ENCODE measurements at regions of chr16 and their contacts with region 1.

Region 1: GRCh38 chr16:14329727-14330350 is 258.7 kb downstream of the MRTFB start:
- DNase-seq: no peak
- H3K4me3 ChIP-seq: no peak overlapping the region
- H3K27ac ChIP-seq: no peak overlapping the region
- H3K4me1 ChIP-seq: no peaks in the 10 kb centered on the region
- H3K27me3 ChIP-seq: peaks cover 0 to 5% of the 10 kb centered on the region in 2 experiments
- CTCF ChIP-seq: no peak
- POLR2A ChIP-seq: no peak

Region 2: GRCh38 chr16:14070877-14071575 is 258.8 kb before region 1 on chr16 and contains the start of gene MRTFB:
- CTCF ChIA-PET with region 1: no interaction called
- POLR2A ChIA-PET with region 1: no interaction called
- dilution Hi-C with region 1: no loop called
- intact Hi-C with region 1: no loop called
- DNase-seq: peak; percentile 70
- H3K4me3 ChIP-seq: peak within 1 kb of the TSS; percentile 74 to 96 (median 82)
- H3K27ac ChIP-seq: peak within 1 kb of the TSS; percentile 68
- H3K4me1 ChIP-seq: peaks cover 11% of the 10 kb centered on the region
- H3K27me3 ChIP-seq: no peaks in the 10 kb centered on the region
- CTCF ChIP-seq: no peak
- POLR2A ChIP-seq: no peak
- total RNA-seq, gene MRTFB: 49.5 and 50.2 TPM in 2 replicates

Region 3: GRCh38 chr16:14193316-14193871 is 136.4 kb before region 1 on chr16:
- CTCF ChIA-PET with region 1: no interaction called
- POLR2A ChIA-PET with region 1: no interaction called
- dilution Hi-C with region 1: no loop called
- intact Hi-C with region 1: no loop called
- DNase-seq: no peak
- H3K4me3 ChIP-seq: no peak overlapping the region
- H3K27ac ChIP-seq: no peak overlapping the region
- H3K4me1 ChIP-seq: peaks cover 18% of the 10 kb centered on the region
- H3K27me3 ChIP-seq: no peaks in the 10 kb centered on the region
- CTCF ChIP-seq: no peak
- POLR2A ChIP-seq: no peak

Region 4: DNA sequence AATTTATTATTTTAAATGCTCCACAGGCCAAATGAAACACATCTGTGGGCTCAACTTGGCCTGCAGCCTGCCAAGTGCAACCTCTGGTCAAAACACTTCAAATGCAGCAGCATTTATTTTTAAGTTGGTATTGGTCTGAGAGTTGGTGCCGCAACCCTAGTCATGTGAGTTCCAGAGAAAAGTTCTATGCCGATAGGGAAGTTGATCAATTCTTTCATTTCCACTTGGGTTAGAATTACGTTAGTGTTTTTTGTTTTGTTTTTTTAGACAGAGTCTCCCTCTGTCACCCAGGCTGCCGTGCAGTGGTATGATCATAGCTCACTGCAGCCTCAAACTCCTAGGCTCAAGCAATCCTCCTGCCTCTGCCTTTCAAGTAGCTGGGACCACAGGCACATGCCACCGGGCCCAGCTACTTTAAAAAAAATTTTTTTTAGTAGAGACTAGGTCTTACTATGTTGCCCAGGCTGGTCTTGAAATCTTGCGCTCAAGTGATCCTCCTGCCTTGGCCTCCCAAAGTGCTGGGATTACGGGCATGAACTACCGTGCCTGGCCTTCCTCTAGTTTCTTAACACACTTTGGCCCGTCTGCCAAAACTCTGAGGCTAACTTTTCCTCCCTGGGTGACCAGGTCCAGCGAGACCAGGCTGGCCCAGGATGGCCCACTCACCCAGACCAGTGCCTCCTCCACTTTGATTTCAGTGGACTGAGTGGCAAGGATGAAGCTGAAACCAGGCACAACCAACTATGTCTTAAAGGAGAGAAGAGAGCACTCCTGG is 37.6 kb before region 1 on chr16:
- CTCF ChIA-PET with region 1: no interaction called
- POLR2A ChIA-PET with region 1: no interaction called
- dilution Hi-C with region 1: no loop called
- intact Hi-C with region 1: no loop called
- DNase-seq: no peak
- H3K4me3 ChIP-seq: no peak overlapping the region
- H3K27ac ChIP-seq: no peak overlapping the region
- H3K4me1 ChIP-seq: no peaks in the 10 kb centered on the region
- H3K27me3 ChIP-seq: no peaks in the 10 kb centered on the region
- CTCF ChIP-seq: no peak
- POLR2A ChIP-seq: no peak

Region 5: DNA sequence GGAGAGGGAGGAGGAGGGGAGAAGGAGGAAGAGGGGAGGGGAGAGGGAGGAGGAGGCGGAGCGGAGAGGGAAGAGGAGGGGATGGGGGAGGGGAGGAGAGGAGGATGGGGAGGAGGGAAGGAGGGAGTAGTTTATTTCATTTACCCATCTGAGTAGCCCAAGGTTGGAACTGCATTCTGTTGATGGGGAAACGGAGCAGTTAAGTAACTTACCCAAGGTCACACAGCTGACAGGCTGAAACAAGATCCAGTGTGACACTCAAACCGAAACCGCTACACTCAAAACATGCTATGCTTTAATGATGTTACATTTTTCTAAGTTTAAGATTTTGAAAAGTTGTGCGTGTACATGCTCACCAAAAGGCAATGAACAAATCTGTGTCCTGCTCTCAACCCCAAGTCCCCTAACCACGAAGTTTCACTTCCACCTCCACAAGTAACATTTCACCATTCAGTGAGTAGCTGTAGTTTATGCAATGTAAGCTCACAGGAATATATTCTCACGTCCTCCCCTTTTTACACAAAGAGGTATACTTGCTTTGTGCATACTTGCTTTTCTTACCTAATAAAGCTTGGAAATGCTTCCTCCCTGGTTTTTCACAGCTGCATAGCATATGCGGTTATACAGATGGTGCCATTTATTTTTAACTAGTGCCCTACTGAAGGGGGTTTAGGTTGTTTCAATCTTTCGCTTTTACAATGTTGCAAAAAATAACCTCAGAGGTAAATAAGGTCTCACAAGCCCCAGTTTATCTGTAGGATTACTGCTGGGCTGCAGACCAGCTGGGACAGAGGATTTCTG is 24.9 kb after region 1 on chr16:
- CTCF ChIA-PET with region 1: no interaction called
- POLR2A ChIA-PET with region 1: no interaction called
- dilution Hi-C with region 1: no loop called
- intact Hi-C with region 1: loop called (anchors 1 kb)
- DNase-seq: no peak
- H3K4me3 ChIP-seq: no peak overlapping the region
- H3K27ac ChIP-seq: no peak overlapping the region
- H3K4me1 ChIP-seq: no peaks in the 10 kb centered on the region
- H3K27me3 ChIP-seq: no peaks in the 10 kb centered on the region
- CTCF ChIP-seq: no peak
- POLR2A ChIP-seq: no peak

Region 6: DNA sequence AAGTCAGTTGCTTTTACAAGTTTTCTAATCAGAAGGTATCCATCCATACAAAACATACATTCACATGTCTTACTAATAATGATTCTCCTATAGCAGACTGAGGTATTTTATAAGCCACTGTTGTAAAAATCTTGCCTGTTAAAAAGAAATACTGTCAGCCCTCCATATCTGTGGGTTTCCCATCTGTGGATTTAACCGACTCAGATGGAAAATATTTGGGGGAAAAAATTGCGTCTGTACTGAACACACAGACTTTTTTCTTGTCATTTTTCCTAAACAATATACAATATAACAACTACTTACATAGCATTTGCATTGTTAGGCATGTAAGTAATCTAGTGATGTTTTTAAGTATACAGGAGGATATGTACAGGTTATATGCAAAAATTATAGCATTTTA is 209.8 kb after region 1 on chr16:
- CTCF ChIA-PET with region 1: no interaction called
- POLR2A ChIA-PET with region 1: no interaction called
- dilution Hi-C with region 1: no loop called
- intact Hi-C with region 1: no loop called
- DNase-seq: no peak
- H3K4me3 ChIP-seq: no peak overlapping the region
- H3K27ac ChIP-seq: no peak overlapping the region
- H3K4me1 ChIP-seq: peaks cover 7% of the 10 kb centered on the region
- H3K27me3 ChIP-seq: no peaks in the 10 kb centered on the region
- CTCF ChIP-seq: no peak
- POLR2A ChIP-seq: no peak

Measured in endothelial cell of umbilical vein (primary cell).